ENCODE measurements at regions of chr5 and their contacts with region 1.

Region 1: GRCh38 chr5:154072414-154073171 is 33.8 kb downstream of the MFAP3 start:
- DNase-seq: peak; percentile 90
- H3K4me3 Mint-ChIP-seq: no peak overlapping the region
- H3K27ac Mint-ChIP-seq: no peak overlapping the region
- H3K4me1 Mint-ChIP-seq: peaks cover 58% of the 10 kb centered on the region
- H3K27me3 Mint-ChIP-seq: peaks cover 32% of the 10 kb centered on the region

Region 2: GRCh38 chr5:154087257-154087656 is 14.7 kb after region 1 on chr5:
- CTCF ChIA-PET with region 1: interaction called, 13 read pairs
- DNase-seq: no peak
- H3K4me3 Mint-ChIP-seq: no peak overlapping the region
- H3K27ac Mint-ChIP-seq: no peak overlapping the region
- H3K4me1 Mint-ChIP-seq: peaks cover 6% of the 10 kb centered on the region
- H3K27me3 Mint-ChIP-seq: peaks cover 8% of the 10 kb centered on the region

Region 3: DNA sequence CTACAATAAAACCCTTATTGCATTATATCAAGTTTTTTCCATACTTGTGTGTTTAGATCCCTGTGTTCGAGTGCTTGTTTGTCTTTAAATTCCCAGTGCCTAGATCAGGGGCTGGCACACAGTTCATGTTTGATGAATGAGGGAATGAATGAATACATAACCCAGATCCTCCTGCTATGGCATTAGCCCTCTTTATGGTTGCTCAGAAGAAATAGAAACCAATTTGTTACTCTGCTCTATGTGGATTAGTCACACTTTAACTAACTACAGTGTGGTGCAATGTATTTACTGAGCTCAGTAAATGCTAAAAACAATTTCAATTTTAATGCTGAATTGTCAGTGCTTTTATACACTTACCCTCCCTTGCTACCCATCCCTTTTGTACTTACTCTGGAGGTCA is 101.5 kb after region 1 on chr5:
- CTCF ChIA-PET with region 1: interaction called, 116 read pairs
- DNase-seq: no peak
- H3K4me3 Mint-ChIP-seq: no peak overlapping the region
- H3K27ac Mint-ChIP-seq: no peak overlapping the region
- H3K4me1 Mint-ChIP-seq: no peaks in the 10 kb centered on the region
- H3K27me3 Mint-ChIP-seq: peaks cover 22% of the 10 kb centered on the region

Region 4: DNA sequence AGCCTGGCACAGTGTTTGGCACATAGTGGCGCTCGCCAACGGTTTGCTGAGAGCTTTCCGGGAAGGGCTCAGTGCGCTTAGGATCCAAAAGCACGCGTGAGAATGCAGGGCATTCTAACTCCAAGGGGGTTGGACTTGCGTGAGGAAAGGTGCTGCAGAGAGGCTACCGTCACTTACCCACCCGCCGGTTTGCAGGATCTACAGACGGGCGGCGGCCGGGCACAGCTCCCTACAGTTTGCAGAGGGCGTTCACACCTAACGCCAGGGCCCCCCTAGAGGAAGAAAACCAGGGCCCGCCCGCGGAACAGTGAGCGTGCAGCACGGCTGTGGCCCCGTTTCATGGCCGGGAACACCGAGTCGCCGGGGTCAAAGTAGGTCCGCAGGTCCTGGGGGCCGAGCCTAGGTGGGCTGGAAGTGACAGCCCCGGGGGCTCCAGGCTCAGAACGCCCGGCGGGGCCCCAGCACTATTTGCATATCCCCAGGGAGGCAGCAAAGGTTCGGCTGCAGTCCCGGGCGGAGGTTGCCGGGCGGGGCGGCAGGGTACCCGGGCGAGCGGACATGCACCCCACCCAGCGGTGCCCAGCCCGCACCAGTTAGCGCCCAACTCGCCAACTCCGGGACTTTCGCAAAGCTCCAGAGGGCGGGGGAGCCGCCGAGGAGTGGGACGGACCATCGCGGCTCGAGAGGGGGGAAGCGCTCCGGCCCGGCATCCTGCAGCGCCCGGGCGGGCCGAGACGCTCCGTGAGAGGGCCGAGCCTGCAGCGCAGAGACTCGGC is 117.4 kb after region 1 on chr5:
- CTCF ChIA-PET with region 1: interaction called, 41 read pairs
- DNase-seq: peak; percentile 87
- H3K4me3 Mint-ChIP-seq: peak overlapping the region; percentile 82
- H3K27ac Mint-ChIP-seq: peak overlapping the region; percentile 72
- H3K4me1 Mint-ChIP-seq: peaks cover 34% of the 10 kb centered on the region
- H3K27me3 Mint-ChIP-seq: peaks cover 13% of the 10 kb centered on the region

Region 5: GRCh38 chr5:154238776-154239481 is 166.3 kb after region 1 on chr5:
- CTCF ChIA-PET with region 1: interaction called, 46 read pairs
- DNase-seq: no peak
- H3K4me3 Mint-ChIP-seq: no peak overlapping the region
- H3K27ac Mint-ChIP-seq: no peak overlapping the region
- H3K4me1 Mint-ChIP-seq: peaks cover 14% of the 10 kb centered on the region
- H3K27me3 Mint-ChIP-seq: no peaks in the 10 kb centered on the region

Region 6: GRCh38 chr5:154467655-154468354 is 395.2 kb after region 1 on chr5:
- CTCF ChIA-PET with region 1: interaction called, 17 read pairs
- DNase-seq: peak; percentile 81
- H3K4me3 Mint-ChIP-seq: no peak overlapping the region
- H3K27ac Mint-ChIP-seq: no peak overlapping the region
- H3K4me1 Mint-ChIP-seq: peaks cover 4% of the 10 kb centered on the region
- H3K27me3 Mint-ChIP-seq: peaks cover 58% of the 10 kb centered on the region

Measured in activated naive CD4-positive, alpha-beta T cell treated with anti-CD3 and anti-CD28 coated beads, Interleukin-2, amount 10 ng/mL, durations not matched to agents 7 days and 5 days (primary cell).